Mammary epithelial cell (primary cell): ENCODE measurements at regions of chr5 and their contacts with region 1.

Region 1: DNA sequence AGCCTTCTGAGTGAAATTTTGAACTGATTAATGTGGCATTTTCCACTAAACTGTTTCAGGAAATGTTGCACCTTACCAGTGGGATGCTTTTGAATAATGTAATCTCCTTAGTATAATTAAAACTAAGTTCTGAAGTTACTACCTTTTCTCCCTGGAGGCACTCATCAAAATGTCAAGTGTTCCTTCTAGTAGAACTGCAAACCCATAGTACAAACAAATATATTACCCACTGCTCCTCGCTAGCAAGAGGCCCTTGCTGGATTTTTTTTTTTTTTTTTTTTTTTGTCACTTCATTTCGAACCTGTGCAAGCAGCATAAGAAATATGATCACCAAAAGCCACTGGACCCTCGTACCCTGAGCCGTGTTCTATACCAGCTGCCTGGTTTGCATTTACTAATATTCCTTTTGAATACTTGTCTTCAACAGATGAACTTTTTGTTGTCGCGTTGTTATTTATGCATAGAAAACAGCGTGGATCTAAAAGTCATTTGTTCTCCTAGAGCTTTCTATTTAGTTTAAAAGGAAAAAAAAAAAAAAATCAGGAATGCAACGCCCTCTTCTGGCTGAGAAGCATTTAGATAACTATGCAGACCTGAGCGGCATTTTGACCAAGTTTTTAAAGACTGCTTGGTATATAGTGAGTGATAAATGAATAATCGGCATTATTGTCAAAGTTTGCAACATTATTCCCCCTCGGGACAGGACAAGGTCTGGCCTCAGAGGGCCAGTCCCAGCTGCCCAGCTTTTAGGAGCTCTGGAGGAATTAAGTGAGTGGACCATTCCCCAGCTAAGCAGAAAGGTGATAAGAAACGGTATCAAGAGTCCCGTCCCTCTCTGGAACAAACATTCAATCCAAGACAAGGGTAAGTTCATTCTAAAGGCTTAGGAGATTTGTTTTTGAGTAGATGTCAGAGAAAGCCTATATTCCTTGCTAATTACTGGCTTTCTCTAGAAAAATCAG is 162.5 kb upstream of the KIF2A start:
- DNase-seq: peak; percentile 40
- H3K4me3 ChIP-seq: no peak overlapping the region
- H3K27ac ChIP-seq: no peak overlapping the region
- H3K4me1 ChIP-seq: peaks cover 14% of the 10 kb centered on the region
- H3K27me3 ChIP-seq: no peaks in the 10 kb centered on the region
- CTCF ChIP-seq: peak; percentile 58 to 61

Region 2: GRCh38 chr5:61270510-61271165 is 872.9 kb before region 1 on chr5:
- CTCF ChIA-PET with region 1: interaction called, 10 read pairs
- dilution Hi-C with region 1: no loop called
- in situ Hi-C with region 1: no loop called
- intact Hi-C with region 1: no loop called
- DNase-seq: peak; percentile 51
- H3K4me3 ChIP-seq: no peak overlapping the region
- H3K27ac ChIP-seq: no peak overlapping the region
- H3K4me1 ChIP-seq: peaks cover 5% of the 10 kb centered on the region
- H3K27me3 ChIP-seq: peaks cover 2% of the 10 kb centered on the region
- CTCF ChIP-seq: no peak

Region 3: GRCh38 chr5:61941637-61942036 is 201.9 kb before region 1 on chr5:
- CTCF ChIA-PET with region 1: interaction called, 8 read pairs
- dilution Hi-C with region 1: no loop called
- in situ Hi-C with region 1: loop called in 1 of 2 experiments (anchors 10 kb)
- intact Hi-C with region 1: loop called (anchors 1 kb)
- DNase-seq: peak; percentile 56
- H3K4me3 ChIP-seq: no peak overlapping the region
- H3K27ac ChIP-seq: no peak overlapping the region
- H3K4me1 ChIP-seq: peaks cover 6% of the 10 kb centered on the region
- H3K27me3 ChIP-seq: no peaks in the 10 kb centered on the region
- CTCF ChIP-seq: peak in 1 of 2 donors; percentile 35

Region 4: GRCh38 chr5:61949679-61950435 is 193.7 kb before region 1 on chr5:
- CTCF ChIA-PET with region 1: no interaction called
- dilution Hi-C with region 1: no loop called
- in situ Hi-C with region 1: loop called (anchors 10 kb)
- intact Hi-C with region 1: no loop called
- DNase-seq: no peak
- H3K4me3 ChIP-seq: no peak overlapping the region
- H3K27ac ChIP-seq: no peak overlapping the region
- H3K4me1 ChIP-seq: peaks cover 8% of the 10 kb centered on the region
- H3K27me3 ChIP-seq: no peaks in the 10 kb centered on the region
- CTCF ChIP-seq: no peak